Panc1 (cell line): ENCODE measurements at regions of chr10 and their contacts with region 1.

Region 1: DNA sequence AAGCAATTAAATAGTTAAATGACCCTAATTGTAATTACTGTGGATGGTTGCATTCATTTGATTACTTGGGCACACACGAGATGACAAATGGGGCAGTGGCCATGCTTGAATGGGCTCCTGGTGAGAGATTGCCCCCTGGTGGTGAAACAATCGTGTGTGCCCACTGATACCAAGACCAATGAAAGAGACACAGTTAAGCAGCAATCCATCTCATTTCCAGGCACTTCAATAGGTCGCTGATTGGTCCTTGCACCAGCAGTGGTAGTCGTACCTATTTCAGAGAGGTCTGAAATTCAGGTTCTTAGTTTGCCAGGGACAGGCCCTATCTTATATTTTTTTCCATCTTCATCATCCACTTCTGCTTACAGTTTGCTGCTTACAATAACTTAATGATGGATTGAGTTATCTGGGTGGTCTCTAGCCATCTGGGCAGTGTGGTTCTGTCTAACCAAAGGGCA is 8.3 kb downstream of the PCBD1 start:
- DNase-seq: peak; percentile 61
- ATAC-seq: peak; percentile 96
- H3K4me3 ChIP-seq: no peak overlapping the region
- H3K27ac ChIP-seq: no peak overlapping the region
- H3K4me1 ChIP-seq: no peaks in the 10 kb centered on the region
- H3K27me3 ChIP-seq: no peaks in the 10 kb centered on the region
- CTCF ChIP-seq: peak; percentile 97

Region 2: GRCh38 chr10:70461215-70461986 is 418.7 kb before region 1 on chr10:
- CTCF ChIA-PET with region 1: no interaction called
- POLR2A ChIA-PET with region 1: no interaction called
- in situ Hi-C with region 1: no loop called
- intact Hi-C with region 1: loop called (anchors 10 kb)
- DNase-seq: peak; percentile 55
- ATAC-seq: peak; percentile 86
- H3K4me3 ChIP-seq: no peak overlapping the region
- H3K27ac ChIP-seq: no peak overlapping the region
- H3K4me1 ChIP-seq: peaks cover 6% of the 10 kb centered on the region
- H3K27me3 ChIP-seq: no peaks in the 10 kb centered on the region
- CTCF ChIP-seq: peak; percentile 98

Region 3: GRCh38 chr10:70619271-70620019 is 260.7 kb before region 1 on chr10:
- CTCF ChIA-PET with region 1: no interaction called
- POLR2A ChIA-PET with region 1: no interaction called
- in situ Hi-C with region 1: no loop called
- intact Hi-C with region 1: loop called (anchors 5 kb)
- DNase-seq: peak; percentile 10
- ATAC-seq: no peak
- H3K4me3 ChIP-seq: no peak overlapping the region
- H3K27ac ChIP-seq: no peak overlapping the region
- H3K4me1 ChIP-seq: no peaks in the 10 kb centered on the region
- H3K27me3 ChIP-seq: peaks cover 23% of the 10 kb centered on the region
- CTCF ChIP-seq: peak; percentile 50

Region 4: DNA sequence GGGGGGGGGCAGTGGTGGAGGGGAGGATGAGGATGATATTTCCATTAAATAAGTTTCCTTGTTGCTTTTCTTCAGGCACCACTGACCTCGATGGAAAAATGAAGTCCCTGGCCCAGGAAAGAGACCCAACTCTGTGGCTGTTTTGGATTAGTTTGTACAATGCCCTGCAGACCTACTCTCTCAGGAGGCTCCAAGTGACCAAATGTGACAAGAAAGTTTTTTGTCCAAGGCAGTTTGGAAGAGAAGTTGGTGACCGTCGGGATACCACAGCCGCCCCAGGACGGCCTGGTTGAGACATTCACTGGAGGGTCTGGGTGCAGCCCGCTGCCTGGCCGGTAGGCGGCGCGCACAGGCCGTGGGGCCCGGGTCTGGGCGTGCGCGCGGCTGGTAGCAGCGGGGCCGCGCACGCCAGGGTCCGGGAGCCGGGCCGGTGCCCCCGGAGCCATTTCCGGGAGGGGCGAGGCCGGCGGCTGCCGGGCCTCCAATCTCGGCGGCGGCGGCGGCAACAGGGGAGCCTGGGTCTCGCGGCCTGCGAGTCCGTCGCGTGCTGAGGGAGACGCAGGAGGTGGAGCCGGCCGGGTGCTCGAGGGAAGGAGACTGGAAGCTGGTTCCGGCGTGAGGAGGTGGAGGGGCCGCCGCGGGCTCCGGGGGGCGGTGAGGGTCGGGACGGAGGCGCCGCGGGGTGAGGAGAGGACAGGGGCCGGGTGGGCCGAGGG is 64.4 kb before region 1 on chr10 and contains the start of gene SGPL1:
- CTCF ChIA-PET with region 1: no interaction called
- POLR2A ChIA-PET with region 1: interaction called, 3 read pairs
- in situ Hi-C with region 1: no loop called
- intact Hi-C with region 1: loop called (anchors 2 kb)
- DNase-seq: peak; percentile 17
- ATAC-seq: peak; percentile 92
- H3K4me3 ChIP-seq: peak within 1 kb of the TSS; percentile 68 to 89
- H3K27ac ChIP-seq: peak within 1 kb of the TSS; percentile 71
- H3K4me1 ChIP-seq: peaks cover 10% of the 10 kb centered on the region; the same call in 1 of the 2 replicates
- H3K27me3 ChIP-seq: no peaks in the 10 kb centered on the region
- CTCF ChIP-seq: peak; percentile 100
- total RNA-seq, gene SGPL1: 103 TPM

Region 5: DNA sequence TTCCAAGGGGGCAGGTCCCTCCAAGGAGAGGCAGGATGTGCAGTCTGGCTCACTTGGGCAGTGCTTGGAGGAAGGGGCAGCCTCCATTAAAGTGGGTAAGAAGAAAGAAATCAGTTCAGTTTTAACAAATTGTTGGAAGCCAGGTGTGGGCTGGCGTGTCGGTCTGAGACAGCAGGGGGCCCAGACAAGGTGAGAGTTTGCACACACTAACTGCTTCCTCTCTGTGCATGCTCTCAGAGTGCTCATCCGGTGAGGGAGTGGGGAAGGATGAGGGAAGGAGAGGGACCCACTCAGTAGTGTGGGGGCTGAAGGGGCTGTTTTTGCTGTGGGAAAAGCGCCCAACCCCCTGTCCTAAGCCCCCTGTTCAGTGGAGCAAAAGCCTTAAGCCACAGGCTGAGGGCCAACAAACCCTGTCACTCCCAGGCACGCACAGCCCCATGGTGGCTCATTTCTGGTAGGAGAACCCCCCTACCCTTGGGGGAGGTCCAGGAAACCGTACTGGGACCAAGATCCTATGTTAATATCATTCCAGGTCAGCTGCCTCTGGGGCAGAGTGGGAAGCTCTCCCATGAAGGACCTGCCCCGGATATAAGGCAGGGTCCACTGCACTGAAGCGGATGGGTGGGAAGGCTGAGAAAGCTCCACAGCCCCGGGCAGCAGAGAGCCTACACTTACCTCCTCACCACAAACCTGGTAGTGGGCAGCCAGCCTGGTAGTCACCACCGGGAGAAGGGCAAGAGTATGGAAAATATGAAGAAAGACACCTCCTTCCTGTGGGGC is 13.3 kb after region 1 on chr10:
- CTCF ChIA-PET with region 1: no interaction called
- POLR2A ChIA-PET with region 1: interaction called, 17 read pairs
- in situ Hi-C with region 1: no loop called
- intact Hi-C with region 1: no loop called
- DNase-seq: no peak
- ATAC-seq: no peak
- H3K4me3 ChIP-seq: no peak overlapping the region
- H3K27ac ChIP-seq: no peak overlapping the region
- H3K4me1 ChIP-seq: peaks cover 7% of the 10 kb centered on the region; the same call in 1 of the 2 replicates
- H3K27me3 ChIP-seq: no peaks in the 10 kb centered on the region
- CTCF ChIP-seq: no peak

Region 6: DNA sequence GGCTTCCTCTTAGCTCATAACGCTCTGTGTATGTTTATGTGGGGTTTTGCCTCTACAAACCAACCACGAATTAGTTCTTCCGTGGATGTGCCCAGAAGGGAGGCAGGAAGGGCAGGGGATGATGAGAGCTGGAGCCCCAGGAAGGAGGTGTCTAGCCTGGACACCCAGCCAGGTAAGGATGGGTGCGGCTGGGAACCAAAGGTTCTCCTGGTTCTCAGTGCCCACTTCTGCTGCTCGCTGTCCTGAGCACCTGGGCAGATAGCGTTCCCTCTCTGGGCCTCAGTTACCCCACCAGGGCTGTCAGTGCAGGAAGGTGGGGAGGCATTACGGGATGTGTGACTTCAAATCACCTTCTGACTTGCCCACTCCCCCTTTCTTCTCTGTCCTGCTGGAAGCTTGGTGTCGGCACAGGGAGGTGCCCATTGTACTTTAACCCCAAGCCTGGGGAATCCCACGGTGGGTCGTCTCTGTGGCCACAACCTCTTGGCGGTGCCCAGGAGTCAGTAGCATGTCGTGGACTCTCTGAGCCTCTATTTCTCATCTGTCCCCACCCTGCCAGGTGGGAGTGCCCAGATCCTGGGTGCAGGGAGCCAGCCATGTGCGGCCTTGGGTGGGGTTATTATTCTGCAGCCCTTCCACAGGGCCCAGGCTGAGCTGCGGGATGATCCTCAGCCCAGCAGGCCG is 27.0 kb after region 1 on chr10:
- CTCF ChIA-PET with region 1: no interaction called
- POLR2A ChIA-PET with region 1: no interaction called
- in situ Hi-C with region 1: no loop called
- intact Hi-C with region 1: no loop called
- DNase-seq: no peak
- ATAC-seq: no peak
- H3K4me3 ChIP-seq: no peak overlapping the region
- H3K27ac ChIP-seq: no peak overlapping the region
- H3K4me1 ChIP-seq: no peaks in the 10 kb centered on the region
- H3K27me3 ChIP-seq: no peaks in the 10 kb centered on the region
- CTCF ChIP-seq: no peak